Caco-2 (cell line): ENCODE measurements at regions of chr4 and their contacts with region 1.

Region 1: DNA sequence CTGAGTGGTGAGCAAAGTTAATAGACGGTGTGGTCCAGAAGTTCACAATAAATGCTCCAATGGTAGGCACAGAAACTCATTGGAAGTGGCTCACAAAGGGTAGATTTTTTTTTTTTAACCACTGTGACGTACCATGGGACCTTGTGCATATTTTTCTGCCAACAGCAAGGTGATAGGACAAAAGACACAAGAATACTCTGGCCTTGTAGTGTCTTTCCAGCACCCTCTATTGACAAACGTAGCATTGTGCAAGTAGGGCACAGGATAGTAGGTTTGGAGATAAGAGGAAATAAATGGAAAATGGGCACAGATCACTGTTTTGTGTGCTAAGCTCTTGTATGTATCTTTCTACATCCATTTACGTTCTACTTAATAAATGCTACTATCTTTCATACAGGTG is 2054.9 kb downstream of the PCDH7 start:
- DNase-seq: peak; percentile 19 to 46
- H3K4me3 ChIP-seq: no peak overlapping the region
- H3K4me3 Mint-ChIP-seq: no peak overlapping the region
- H3K27ac Mint-ChIP-seq: no peak overlapping the region
- H3K4me1 ChIP-seq: no peaks in the 10 kb centered on the region
- H3K4me1 Mint-ChIP-seq: no peaks in the 10 kb centered on the region
- H3K27me3 ChIP-seq: no peaks in the 10 kb centered on the region
- H3K27me3 Mint-ChIP-seq: no peaks in the 10 kb centered on the region
- CTCF ChIP-seq: peak in 1 of 2 experiments; percentile 49

Region 2: DNA sequence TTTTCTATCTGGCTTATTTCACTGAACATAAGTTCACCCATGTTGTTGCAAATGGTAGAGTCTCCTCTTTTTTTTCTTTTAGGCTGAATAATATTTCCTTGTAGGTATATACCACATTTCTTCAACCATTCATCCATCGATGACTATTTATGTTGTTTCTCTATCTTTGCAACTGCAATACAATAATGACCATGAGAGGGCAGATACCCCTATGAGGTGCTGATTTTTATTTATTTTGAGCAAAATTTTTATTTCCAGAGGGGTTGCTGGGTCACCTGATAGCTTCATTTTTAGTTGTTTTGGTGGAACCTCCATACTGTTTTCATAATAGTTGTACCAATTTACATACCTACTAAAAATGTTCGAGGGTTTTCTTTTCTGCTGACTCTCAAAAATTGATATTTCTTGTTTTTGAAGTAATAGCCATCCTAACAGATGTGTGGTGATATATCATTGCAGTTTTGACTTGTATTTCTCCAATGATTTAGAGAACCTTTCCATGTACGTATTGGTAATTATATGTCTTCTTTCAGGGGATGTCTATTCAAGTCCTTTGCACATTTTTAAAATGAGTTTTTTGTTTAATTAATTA is 357.8 kb before region 1 on chr4:
- CTCF ChIA-PET with region 1: no interaction called
- POLR2A ChIA-PET with region 1: no interaction called
- intact Hi-C with region 1: loop called (anchors 1 kb)
- DNase-seq: no peak
- H3K4me3 ChIP-seq: no peak overlapping the region
- H3K4me3 Mint-ChIP-seq: no peak overlapping the region
- H3K27ac Mint-ChIP-seq: no peak overlapping the region
- H3K4me1 ChIP-seq: no peaks in the 10 kb centered on the region
- H3K4me1 Mint-ChIP-seq: no peaks in the 10 kb centered on the region
- H3K27me3 ChIP-seq: no peaks in the 10 kb centered on the region
- H3K27me3 Mint-ChIP-seq: no peaks in the 10 kb centered on the region
- CTCF ChIP-seq: no peak

Region 3: DNA sequence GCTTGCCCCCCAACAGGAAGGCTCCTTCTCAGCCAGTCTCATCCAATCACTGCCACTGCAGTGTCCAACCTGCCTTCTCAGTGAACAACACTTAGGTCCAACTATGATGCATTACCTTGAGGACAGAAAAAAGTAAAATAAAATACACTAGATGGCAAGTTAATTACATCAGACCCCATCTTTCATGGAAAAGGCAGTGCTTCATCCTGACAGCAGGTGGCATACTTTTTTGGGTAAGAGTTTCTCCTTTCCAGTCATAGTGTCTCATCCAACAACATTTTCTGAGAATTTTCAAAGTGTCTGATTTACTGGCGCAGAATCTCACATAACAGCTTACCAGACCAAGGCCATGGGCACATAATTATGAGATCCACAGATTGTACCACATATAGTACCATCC is 312.1 kb before region 1 on chr4:
- CTCF ChIA-PET with region 1: no interaction called
- POLR2A ChIA-PET with region 1: no interaction called
- intact Hi-C with region 1: loop called (anchors 1 kb)
- DNase-seq: peak in 1 of 2 experiments; percentile 21
- H3K4me3 ChIP-seq: no peak overlapping the region
- H3K4me3 Mint-ChIP-seq: no peak overlapping the region
- H3K27ac Mint-ChIP-seq: no peak overlapping the region
- H3K4me1 ChIP-seq: no peaks in the 10 kb centered on the region
- H3K4me1 Mint-ChIP-seq: no peaks in the 10 kb centered on the region
- H3K27me3 ChIP-seq: no peaks in the 10 kb centered on the region
- H3K27me3 Mint-ChIP-seq: no peaks in the 10 kb centered on the region
- CTCF ChIP-seq: peak; percentile 48 to 56

Region 4: DNA sequence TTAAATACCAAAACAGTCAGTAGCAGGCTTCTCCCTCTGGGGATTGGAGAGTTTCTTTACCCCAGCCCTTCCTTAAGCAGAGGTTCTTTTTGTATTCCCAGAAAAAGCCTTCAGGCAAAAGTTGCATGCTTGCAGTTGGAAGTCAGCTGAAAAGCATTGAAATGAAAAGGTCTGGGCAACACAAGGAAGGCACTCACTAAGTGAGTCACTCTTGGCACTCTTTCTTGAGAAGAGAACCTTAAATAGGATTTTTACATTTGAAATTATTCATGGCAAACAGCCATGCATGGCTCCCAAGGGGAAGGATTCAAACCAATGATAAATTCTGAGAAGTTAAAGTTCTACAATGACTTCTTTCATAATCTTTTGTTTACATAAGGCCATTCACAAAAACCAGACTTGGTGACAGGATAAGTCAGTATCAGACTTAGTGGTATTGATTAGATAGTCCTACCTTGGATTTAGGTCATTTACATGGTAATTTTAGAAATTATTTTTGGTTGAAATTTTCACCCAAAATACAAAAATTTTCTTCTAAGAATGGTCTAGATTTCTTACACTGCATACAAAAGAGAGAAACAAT is 14.1 kb after region 1 on chr4:
- CTCF ChIA-PET with region 1: no interaction called
- POLR2A ChIA-PET with region 1: no interaction called
- intact Hi-C with region 1: no loop called
- DNase-seq: no peak
- H3K4me3 ChIP-seq: no peak overlapping the region
- H3K4me3 Mint-ChIP-seq: no peak overlapping the region
- H3K27ac Mint-ChIP-seq: no peak overlapping the region
- H3K4me1 ChIP-seq: no peaks in the 10 kb centered on the region
- H3K4me1 Mint-ChIP-seq: no peaks in the 10 kb centered on the region
- H3K27me3 ChIP-seq: no peaks in the 10 kb centered on the region
- H3K27me3 Mint-ChIP-seq: no peaks in the 10 kb centered on the region
- CTCF ChIP-seq: no peak